ENCODE measurements at regions of chr13 and their contacts with region 1.

Region 1: GRCh38 chr13:20404488-20405222 is 121.0 kb downstream of the CRYL1 start:
- DNase-seq: no peak
- H3K4me3 ChIP-seq: no peak overlapping the region
- H3K27ac ChIP-seq: no peak overlapping the region
- H3K4me1 ChIP-seq: peaks cover 42% of the 10 kb centered on the region
- H3K27me3 ChIP-seq: no peaks in the 10 kb centered on the region
- CTCF ChIP-seq: no peak

Region 2: DNA sequence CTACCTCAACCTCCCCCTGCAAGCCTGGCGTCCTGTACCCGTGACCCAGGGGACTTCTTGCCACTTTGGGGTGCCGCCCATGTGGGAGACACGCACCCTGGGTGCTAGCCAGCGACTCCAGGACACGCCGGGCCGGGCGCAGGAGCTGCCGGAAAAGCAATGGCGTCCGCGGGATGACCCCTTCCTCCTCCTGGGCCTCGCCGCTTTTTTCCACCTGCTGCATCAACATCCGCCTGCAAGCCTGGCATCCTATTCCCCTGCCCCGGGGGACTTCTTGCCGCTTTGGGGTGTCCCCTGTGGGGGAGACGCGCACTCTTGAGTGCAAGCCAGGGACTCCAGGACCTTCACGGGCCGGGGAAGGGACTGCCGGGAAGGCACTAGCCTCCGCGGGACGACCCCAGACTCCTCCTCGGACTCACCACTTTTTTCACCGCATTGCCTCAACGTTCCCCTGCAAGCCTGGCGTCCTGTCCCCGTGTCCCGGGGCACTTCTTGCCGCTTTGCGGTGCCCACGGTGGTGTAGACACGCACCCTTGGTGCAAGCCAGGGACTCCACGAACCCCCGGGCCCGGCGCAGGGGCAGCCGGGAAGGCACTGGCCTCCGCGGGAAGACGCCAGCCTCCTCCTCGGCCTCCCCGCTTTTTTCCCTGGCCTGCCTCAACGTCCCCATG is 1460.8 kb before region 1 on chr13:
- CTCF ChIA-PET with region 1: no interaction called
- POLR2A ChIA-PET with region 1: no interaction called
- intact Hi-C with region 1: no loop called
- DNase-seq: no peak
- H3K4me3 ChIP-seq: no peak overlapping the region
- H3K27ac ChIP-seq: no peak overlapping the region
- H3K4me1 ChIP-seq: no peaks in the 10 kb centered on the region
- H3K27me3 ChIP-seq: peaks cover 34% of the 10 kb centered on the region
- CTCF ChIP-seq: no peak

Region 3: GRCh38 chr13:19185086-19185864 is 1219.4 kb before region 1 on chr13:
- CTCF ChIA-PET with region 1: no interaction called
- POLR2A ChIA-PET with region 1: no interaction called
- intact Hi-C with region 1: no loop called
- DNase-seq: no peak
- H3K4me3 ChIP-seq: no peak overlapping the region
- H3K27ac ChIP-seq: no peak overlapping the region
- H3K4me1 ChIP-seq: no peaks in the 10 kb centered on the region
- H3K27me3 ChIP-seq: peaks cover 44% of the 10 kb centered on the region
- CTCF ChIP-seq: no peak

Region 4: DNA sequence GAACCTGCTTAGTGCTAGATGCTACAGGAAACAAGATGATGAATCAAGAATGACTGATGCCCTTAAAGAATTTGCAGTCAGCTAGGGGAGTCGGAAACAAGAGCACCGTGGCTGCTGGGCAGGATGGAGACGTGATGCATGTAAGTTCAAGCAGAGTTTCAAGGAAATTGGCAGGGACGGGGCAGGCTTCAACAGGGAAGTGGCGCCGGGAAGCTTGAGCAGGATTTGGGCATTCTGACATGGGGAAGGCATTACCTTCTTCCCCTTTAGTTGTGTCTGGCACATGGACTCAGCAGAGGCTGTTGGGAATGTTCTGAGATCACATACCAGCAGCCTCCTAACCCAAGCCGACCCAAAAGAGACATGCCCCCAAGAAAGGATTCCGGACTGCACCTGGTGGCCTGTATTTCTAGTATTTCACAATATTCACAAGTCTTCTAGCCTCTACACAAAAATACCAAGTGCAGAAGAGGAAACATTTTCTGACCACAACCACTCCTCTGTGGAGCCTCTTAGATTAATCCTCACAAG is 17.1 kb before region 1 on chr13:
- CTCF ChIA-PET with region 1: no interaction called
- POLR2A ChIA-PET with region 1: interaction called, 11 read pairs
- intact Hi-C with region 1: no loop called
- DNase-seq: peak in 1 of 2 experiments; percentile 70
- H3K4me3 ChIP-seq: no peak overlapping the region
- H3K27ac ChIP-seq: peak overlapping the region; percentile 59
- H3K4me1 ChIP-seq: peaks cover 16% of the 10 kb centered on the region
- H3K27me3 ChIP-seq: no peaks in the 10 kb centered on the region
- CTCF ChIP-seq: no peak

Region 5: DNA sequence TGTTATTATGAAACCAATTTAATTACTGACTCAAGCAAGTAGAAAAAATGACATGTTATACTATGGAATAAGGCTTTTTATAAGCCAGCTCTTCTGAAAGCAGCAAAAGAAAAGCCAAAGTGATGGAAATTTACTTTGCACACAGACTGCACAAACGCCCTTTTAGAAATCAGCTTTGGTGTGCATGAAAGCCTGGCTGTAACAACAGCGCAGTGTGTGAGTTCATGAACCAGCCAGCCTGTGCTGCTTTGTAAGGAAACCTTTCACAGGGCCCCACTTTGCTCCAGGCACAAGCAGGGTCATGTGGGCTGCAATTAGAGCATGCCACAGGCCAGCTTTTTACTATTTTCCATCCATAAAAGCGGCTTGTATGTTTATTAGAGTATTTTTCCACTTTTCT is 148.7 kb after region 1 on chr13:
- CTCF ChIA-PET with region 1: no interaction called
- POLR2A ChIA-PET with region 1: interaction called, 11 read pairs
- intact Hi-C with region 1: no loop called
- DNase-seq: no peak
- H3K4me3 ChIP-seq: no peak overlapping the region
- H3K27ac ChIP-seq: no peak overlapping the region
- H3K4me1 ChIP-seq: no peaks in the 10 kb centered on the region
- H3K27me3 ChIP-seq: no peaks in the 10 kb centered on the region
- CTCF ChIP-seq: no peak

Measured in PC-9 (cell line).